GM12878 (cell line): ENCODE measurements at regions of chr6 and their contacts with region 1.

Region 1: GRCh38 chr6:27795697-27796494 is 116.3 kb downstream of the OR2B2 start:
- DNase-seq: peak; percentile 91
- ATAC-seq: peak; percentile 62
- H3K4me3 ChIP-seq: no peak overlapping the region
- H3K27ac ChIP-seq: no peak overlapping the region
- H3K4me1 ChIP-seq: peaks cover 22% of the 10 kb centered on the region
- H3K27me3 ChIP-seq: no peaks in the 10 kb centered on the region
- CTCF ChIP-seq: peak; percentile 69 to 80 (median 80)
- EP300 ChIP-seq: peak in 1 of 2 experiments; percentile 75; a peak in 1 of 4 replicates
- POLR2A ChIP-seq: no peak
- RAD21 ChIP-seq: peak; percentile 77

Region 2: GRCh38 chr6:27157459-27158315 is 638.2 kb before region 1 on chr6:
- CTCF ChIA-PET with region 1: interaction called, 29 read pairs
- POLR2A ChIA-PET with region 1: no interaction called
- RAD21 ChIA-PET with region 1: interaction called, 4 read pairs
- SMC1A ChIA-PET with region 1: interaction called, 5 read pairs
- in situ Hi-C with region 1: loop called (anchors 10 kb)
- intact Hi-C with region 1: no loop called
- DNase-seq: peak; percentile 66
- ATAC-seq: peak; percentile 83
- H3K4me3 ChIP-seq: peak overlapping the region; percentile 70
- H3K27ac ChIP-seq: peak overlapping the region; percentile 45
- H3K4me1 ChIP-seq: peaks cover 8% of the 10 kb centered on the region
- H3K27me3 ChIP-seq: no peaks in the 10 kb centered on the region
- CTCF ChIP-seq: peak in 2 of 3 experiments; percentile 56 to 63; a peak in 5 of 6 replicates
- EP300 ChIP-seq: peak in 1 of 2 experiments; percentile 74; a peak in 1 of 4 replicates
- POLR2A ChIP-seq: no peak
- RAD21 ChIP-seq: peak; percentile 43

Region 3: DNA sequence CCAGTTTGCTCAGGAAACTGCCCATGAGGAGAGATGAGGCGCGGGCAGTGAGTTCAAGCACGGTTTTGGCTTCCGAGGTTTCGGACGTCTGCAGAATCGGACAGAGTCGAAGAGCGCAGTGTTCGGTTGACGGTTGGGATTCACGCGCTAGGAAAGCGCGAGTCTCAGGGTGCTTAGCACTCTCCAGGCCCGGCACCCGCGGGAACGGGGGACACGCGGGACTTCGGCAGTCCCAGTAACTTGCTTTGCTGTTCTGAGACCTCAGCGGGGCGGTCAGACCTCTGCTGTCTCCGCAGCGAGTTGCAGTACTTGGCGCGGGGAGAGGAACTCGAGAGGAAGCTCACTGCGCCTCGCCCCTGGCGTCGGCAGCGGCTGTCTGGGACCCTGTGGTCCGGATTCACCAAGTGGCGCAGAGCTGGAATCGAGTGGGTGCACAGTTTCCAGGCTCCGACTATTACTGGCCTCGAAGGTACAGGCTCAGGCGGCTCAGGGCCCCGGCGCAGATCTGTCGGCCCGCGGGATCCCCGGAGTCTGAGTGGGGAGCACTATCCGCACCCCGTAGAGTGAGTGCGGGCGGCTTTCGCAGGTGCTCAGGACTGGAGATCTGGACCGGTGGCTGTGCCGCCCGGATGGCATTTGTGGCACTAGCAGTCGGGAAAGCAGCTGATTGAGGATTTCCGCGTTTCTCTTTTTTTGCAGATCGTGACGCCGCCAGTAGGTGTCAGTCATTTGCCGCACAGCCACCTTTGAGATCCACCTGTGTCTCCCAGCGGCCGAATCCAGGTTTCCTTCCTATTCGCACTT is 483.5 kb before region 1 on chr6 and contains the start of gene POM121L2:
- CTCF ChIA-PET with region 1: interaction called, 28 read pairs
- POLR2A ChIA-PET with region 1: no interaction called
- RAD21 ChIA-PET with region 1: interaction called, 5 read pairs
- SMC1A ChIA-PET with region 1: interaction called, 12 read pairs
- in situ Hi-C with region 1: no loop called
- intact Hi-C with region 1: no loop called
- DNase-seq: no peak
- ATAC-seq: peak; percentile 89
- H3K4me3 ChIP-seq: peak within 1 kb of the TSS; percentile 82
- H3K27ac ChIP-seq: no peak within 1 kb of the TSS
- H3K4me1 ChIP-seq: 0 out of 2 replicates have a peak, but pooled peaks cover 5% of the 10 kb centered on the region
- H3K27me3 ChIP-seq: no peaks in the 10 kb centered on the region; a peak in 2 of 4 replicates
- CTCF ChIP-seq: peak; percentile 74 to 85 (median 77)
- EP300 ChIP-seq: no peak
- POLR2A ChIP-seq: peak; percentile 45
- RAD21 ChIP-seq: peak; percentile 81
- polyA plus RNA-seq, gene POM121L2: not detected

Region 4: GRCh38 chr6:27608916-27609883 is 186.7 kb before region 1 on chr6:
- CTCF ChIA-PET with region 1: interaction called, 8 read pairs
- POLR2A ChIA-PET with region 1: no interaction called
- RAD21 ChIA-PET with region 1: interaction called, 14 read pairs
- SMC1A ChIA-PET with region 1: interaction called, 7 read pairs
- in situ Hi-C with region 1: no loop called
- intact Hi-C with region 1: no loop called
- DNase-seq: peak; percentile 56
- ATAC-seq: peak; percentile 65
- H3K4me3 ChIP-seq: no peak overlapping the region
- H3K27ac ChIP-seq: no peak overlapping the region
- H3K4me1 ChIP-seq: no peaks in the 10 kb centered on the region
- H3K27me3 ChIP-seq: no peaks in the 10 kb centered on the region
- CTCF ChIP-seq: peak; percentile 82 to 90 (median 90)
- EP300 ChIP-seq: no peak
- POLR2A ChIP-seq: no peak
- RAD21 ChIP-seq: peak; percentile 82

Region 5: DNA sequence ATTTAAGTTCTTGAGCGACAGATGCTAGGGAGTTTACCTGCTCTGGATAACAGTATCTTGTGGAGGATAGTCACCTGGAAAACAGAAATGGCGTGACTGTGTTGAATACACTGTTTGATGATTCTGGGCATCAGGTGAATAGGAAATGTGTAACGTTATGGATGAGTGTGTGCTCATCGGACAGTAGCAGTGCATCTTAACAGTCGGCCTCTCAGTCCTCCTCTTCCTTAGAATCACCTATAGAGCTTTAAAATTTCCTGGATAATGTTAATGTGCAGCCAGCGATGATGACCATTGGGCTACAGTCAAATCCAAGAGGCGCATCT is 101.4 kb before region 1 on chr6:
- CTCF ChIA-PET with region 1: interaction called, 4 read pairs
- POLR2A ChIA-PET with region 1: no interaction called
- RAD21 ChIA-PET with region 1: interaction called, 3 read pairs
- SMC1A ChIA-PET with region 1: interaction called, 4 read pairs
- in situ Hi-C with region 1: no loop called
- intact Hi-C with region 1: loop called (anchors 2 kb)
- DNase-seq: no peak
- ATAC-seq: peak; percentile 32; the same call in 2 of the 3 replicates
- H3K4me3 ChIP-seq: peak overlapping the region; percentile 89
- H3K27ac ChIP-seq: peak overlapping the region; percentile 80
- H3K4me1 ChIP-seq: no peaks in the 10 kb centered on the region; the same call in 1 of the 2 replicates
- H3K27me3 ChIP-seq: no peaks in the 10 kb centered on the region
- CTCF ChIP-seq: no peak
- EP300 ChIP-seq: no peak
- POLR2A ChIP-seq: no peak
- RAD21 ChIP-seq: no peak

Region 6: DNA sequence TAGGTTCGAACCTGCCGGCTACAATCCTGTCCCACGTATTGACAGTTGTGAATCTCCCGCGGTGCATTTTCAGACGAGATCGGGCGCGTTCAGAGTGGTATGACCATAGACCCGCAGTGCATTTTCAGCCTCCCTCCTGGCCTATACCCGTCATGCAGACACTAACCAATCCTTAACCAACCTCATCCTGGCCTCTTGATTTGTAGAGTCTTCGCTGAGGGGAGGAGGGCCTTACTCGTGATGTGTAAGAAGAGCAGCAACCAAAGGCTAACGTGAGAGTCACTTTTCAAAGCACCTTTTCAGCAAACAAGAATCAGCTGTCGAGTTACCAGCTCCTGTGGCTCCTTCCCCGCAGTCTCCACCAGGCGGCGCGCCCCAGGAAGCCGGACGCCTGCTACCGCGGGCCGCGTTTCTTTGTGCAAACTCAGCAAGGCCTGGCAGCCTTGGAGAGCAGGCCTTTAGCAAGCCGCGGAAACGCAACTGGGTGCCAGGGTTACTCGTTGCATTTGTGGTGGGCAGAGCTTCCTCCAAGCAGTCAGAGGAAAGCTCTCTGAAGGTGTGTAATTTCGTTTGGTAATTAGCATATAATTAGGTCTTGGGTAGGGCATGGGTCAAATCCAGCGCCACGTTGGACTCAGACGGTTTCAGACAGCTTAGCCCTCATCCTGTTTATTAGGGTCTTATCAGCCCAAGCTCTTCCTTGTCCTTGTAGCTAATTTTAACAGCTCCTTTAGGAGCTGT is 23.5 kb before region 1 on chr6:
- CTCF ChIA-PET with region 1: interaction called, 9 read pairs
- POLR2A ChIA-PET with region 1: interaction called, 6 read pairs
- RAD21 ChIA-PET with region 1: interaction called, 44 read pairs
- SMC1A ChIA-PET with region 1: interaction called, 5 read pairs
- in situ Hi-C with region 1: no loop called
- intact Hi-C with region 1: no loop called
- DNase-seq: no peak
- ATAC-seq: peak; percentile 86
- H3K4me3 ChIP-seq: no peak overlapping the region
- H3K27ac ChIP-seq: no peak overlapping the region
- H3K4me1 ChIP-seq: peaks cover 18% of the 10 kb centered on the region
- H3K27me3 ChIP-seq: no peaks in the 10 kb centered on the region
- CTCF ChIP-seq: peak; percentile 86 to 95 (median 94)
- EP300 ChIP-seq: no peak
- POLR2A ChIP-seq: no peak
- RAD21 ChIP-seq: peak; percentile 69

Region 7: GRCh38 chr6:27825025-27825793 is 29.3 kb after region 1 on chr6:
- CTCF ChIA-PET with region 1: no interaction called
- POLR2A ChIA-PET with region 1: no interaction called
- RAD21 ChIA-PET with region 1: no interaction called
- SMC1A ChIA-PET with region 1: no interaction called
- in situ Hi-C with region 1: no loop called
- intact Hi-C with region 1: no loop called
- DNase-seq: no peak
- ATAC-seq: peak; percentile 7; the same call in 2 of the 3 replicates
- H3K4me3 ChIP-seq: peak overlapping the region; percentile 66
- H3K27ac ChIP-seq: peak overlapping the region; percentile 96
- H3K4me1 ChIP-seq: no peaks in the 10 kb centered on the region
- H3K27me3 ChIP-seq: no peaks in the 10 kb centered on the region
- CTCF ChIP-seq: no peak
- EP300 ChIP-seq: no peak
- POLR2A ChIP-seq: no peak
- RAD21 ChIP-seq: no peak

Region 8: GRCh38 chr6:27962506-27962905 is 166.6 kb after region 1 on chr6:
- CTCF ChIA-PET with region 1: no interaction called
- POLR2A ChIA-PET with region 1: no interaction called
- RAD21 ChIA-PET with region 1: no interaction called
- SMC1A ChIA-PET with region 1: no interaction called
- in situ Hi-C with region 1: no loop called
- intact Hi-C with region 1: no loop called
- DNase-seq: no peak
- ATAC-seq: no peak
- H3K4me3 ChIP-seq: no peak overlapping the region
- H3K27ac ChIP-seq: no peak overlapping the region
- H3K4me1 ChIP-seq: no peaks in the 10 kb centered on the region
- H3K27me3 ChIP-seq: no peaks in the 10 kb centered on the region
- CTCF ChIP-seq: no peak
- EP300 ChIP-seq: no peak
- POLR2A ChIP-seq: no peak
- RAD21 ChIP-seq: no peak

Region 9: DNA sequence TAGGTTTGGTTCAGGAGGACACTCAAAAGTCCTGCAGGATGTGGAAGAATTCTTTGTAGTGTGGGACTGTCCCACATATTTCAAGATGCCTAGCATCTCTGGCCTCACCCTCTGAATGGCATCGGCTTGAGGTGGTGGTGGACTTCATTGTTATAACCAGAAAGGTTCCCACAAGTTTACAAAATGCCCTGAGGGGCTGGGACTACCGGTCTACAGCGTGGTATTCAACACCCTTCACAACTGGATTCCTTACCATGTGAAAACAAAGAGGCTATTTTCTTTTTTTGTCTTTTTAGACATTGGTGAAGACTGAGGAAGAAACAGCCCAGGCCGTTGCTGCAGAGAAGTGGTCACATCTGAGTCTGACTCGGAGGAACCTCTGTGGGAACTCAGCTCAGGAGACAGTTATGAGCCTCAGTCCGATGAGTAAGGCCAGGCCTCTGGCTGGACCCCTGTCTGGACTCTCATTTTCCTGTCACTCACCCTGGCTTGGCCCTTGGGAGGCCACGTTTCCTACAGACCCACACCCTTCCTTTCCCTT is 500.7 kb after region 1 on chr6:
- CTCF ChIA-PET with region 1: no interaction called
- POLR2A ChIA-PET with region 1: no interaction called
- RAD21 ChIA-PET with region 1: no interaction called
- SMC1A ChIA-PET with region 1: no interaction called
- in situ Hi-C with region 1: no loop called
- intact Hi-C with region 1: no loop called
- DNase-seq: no peak
- ATAC-seq: no peak
- H3K4me3 ChIP-seq: no peak overlapping the region
- H3K27ac ChIP-seq: no peak overlapping the region
- H3K4me1 ChIP-seq: no peaks in the 10 kb centered on the region
- H3K27me3 ChIP-seq: no peaks in the 10 kb centered on the region
- CTCF ChIP-seq: no peak
- EP300 ChIP-seq: no peak
- POLR2A ChIP-seq: no peak
- RAD21 ChIP-seq: no peak